CD4-positive, alpha-beta memory T cell (primary cell): ENCODE measurements at regions of chr7 and their contacts with region 1.

Region 1: DNA sequence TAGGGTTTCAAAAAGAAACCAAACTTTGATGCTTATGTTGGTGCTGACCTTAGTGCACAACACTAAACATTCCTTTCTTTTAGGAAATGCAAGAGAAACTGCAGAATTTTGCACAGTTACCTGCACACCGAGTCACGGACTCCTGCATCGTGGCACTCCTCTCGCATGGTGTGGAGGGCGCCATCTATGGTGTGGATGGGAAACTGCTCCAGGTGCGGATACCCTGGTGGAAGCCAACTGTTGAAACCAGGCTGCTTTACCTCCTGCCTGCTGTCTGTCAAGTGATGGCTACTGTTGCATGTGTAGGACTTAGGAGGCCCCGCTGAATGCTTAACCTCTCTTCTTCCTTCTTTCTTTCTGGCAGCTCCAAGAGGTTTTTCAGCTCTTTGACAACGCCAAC is 11.7 kb downstream of the CASP2 start:
- DNase-seq: peak; percentile 61 to 70 (median 68)
- H3K4me3 ChIP-seq: no peak overlapping the region
- H3K4me3 Mint-ChIP-seq: peak overlapping the region in 5 of 8 donors; percentile 26 to 50 (median 30)
- H3K27ac ChIP-seq: no peak overlapping the region
- H3K27ac Mint-ChIP-seq: peak overlapping the region; percentile 14 to 78 (median 56)
- H3K4me1 ChIP-seq: peaks cover 31% of the 10 kb centered on the region
- H3K4me1 Mint-ChIP-seq: peaks cover 32 to 44% (median 39%) of the 10 kb centered on the region in 4 donors
- H3K27me3 ChIP-seq: no peaks in the 10 kb centered on the region
- H3K27me3 Mint-ChIP-seq: no peaks in the 10 kb centered on the region

Region 2: DNA sequence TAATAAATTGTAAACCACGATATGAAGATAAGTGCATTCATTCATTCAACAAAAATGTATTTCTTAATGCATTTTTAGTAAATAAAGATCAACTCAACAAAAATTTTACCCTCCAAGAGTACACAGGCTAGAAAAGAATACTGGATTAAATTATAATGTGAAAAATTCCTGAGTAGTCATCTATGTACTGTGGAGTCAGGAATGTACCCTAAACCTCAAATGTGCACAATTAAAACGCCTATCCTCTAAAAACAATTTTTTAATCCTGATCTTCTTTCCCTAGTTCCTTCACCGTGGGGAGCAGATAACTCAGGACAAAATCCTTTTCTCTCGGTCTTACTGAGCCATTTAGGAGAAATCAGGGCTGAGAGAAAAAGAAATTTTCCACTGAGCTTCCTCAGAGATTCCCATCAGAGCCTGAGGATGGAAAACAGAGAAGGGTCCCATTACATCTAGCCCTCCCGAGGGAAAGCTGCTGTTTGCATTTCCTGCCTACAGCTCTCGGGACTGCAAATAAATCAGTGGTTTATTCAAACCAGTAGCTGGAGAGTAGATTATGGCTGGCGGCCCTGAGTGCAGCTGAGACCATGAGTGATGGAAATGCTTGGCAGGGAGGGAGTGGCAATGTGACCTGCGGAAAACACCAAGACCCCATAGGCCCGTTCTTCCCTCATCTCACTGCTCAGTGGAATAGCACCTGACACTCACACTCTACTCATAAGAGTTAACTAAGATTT is 70.6 kb before region 1 on chr7:
- CTCF ChIA-PET with region 1: interaction called, 19 read pairs
- POLR2A ChIA-PET with region 1: no interaction called
- intact Hi-C with region 1: no loop called
- DNase-seq: no peak
- H3K4me3 ChIP-seq: no peak overlapping the region
- H3K4me3 Mint-ChIP-seq: no peak overlapping the region
- H3K27ac ChIP-seq: no peak overlapping the region
- H3K27ac Mint-ChIP-seq: no peak overlapping the region
- H3K4me1 ChIP-seq: no peaks in the 10 kb centered on the region
- H3K4me1 Mint-ChIP-seq: no peaks in the 10 kb centered on the region
- H3K27me3 ChIP-seq: no peaks in the 10 kb centered on the region
- H3K27me3 Mint-ChIP-seq: no peaks in the 10 kb centered on the region

Region 3: GRCh38 chr7:143263266-143264195 is 36.3 kb before region 1 on chr7 and contains the start of gene GSTK1:
- CTCF ChIA-PET with region 1: interaction called, 49 read pairs
- POLR2A ChIA-PET with region 1: interaction called, 16 read pairs
- intact Hi-C with region 1: no loop called
- DNase-seq: peak; percentile 69 to 86 (median 75)
- H3K4me3 ChIP-seq: peak within 1 kb of the TSS; percentile 89 to 90
- H3K4me3 Mint-ChIP-seq: peak within 1 kb of the TSS; percentile 93 to 99 (median 96)
- H3K27ac ChIP-seq: peak within 1 kb of the TSS; percentile 89
- H3K27ac Mint-ChIP-seq: peak within 1 kb of the TSS; percentile 91 to 98 (median 94)
- H3K4me1 ChIP-seq: peaks cover 72% of the 10 kb centered on the region
- H3K4me1 Mint-ChIP-seq: peaks cover 40 to 81% (median 62%) of the 10 kb centered on the region in 4 donors
- H3K27me3 ChIP-seq: no peaks in the 10 kb centered on the region
- H3K27me3 Mint-ChIP-seq: no peaks in the 10 kb centered on the region
- total RNA-seq, gene GSTK1: 469 to 482 TPM

Region 4: DNA sequence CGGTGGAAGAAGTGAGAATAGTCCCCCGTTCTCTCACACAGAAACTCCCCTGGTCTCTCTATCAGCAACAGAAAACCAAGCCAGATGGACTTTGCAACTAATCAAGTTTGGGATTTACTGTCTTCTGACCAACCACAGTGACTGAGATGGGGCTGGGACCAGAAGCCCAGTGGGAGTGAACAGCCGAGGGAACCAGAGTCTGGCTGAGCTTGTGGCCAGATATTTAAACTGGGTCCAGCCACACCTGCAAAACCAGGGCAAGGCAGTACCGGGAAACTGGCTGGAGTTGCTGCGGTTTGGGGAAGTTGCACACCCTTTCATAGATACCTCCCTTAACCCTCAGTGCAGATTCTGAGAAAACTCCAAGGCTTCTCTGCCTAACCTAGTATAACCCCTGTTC is 30.6 kb before region 1 on chr7:
- CTCF ChIA-PET with region 1: interaction called, 49 read pairs
- POLR2A ChIA-PET with region 1: interaction called, 16 read pairs
- intact Hi-C with region 1: no loop called
- DNase-seq: no peak
- H3K4me3 ChIP-seq: no peak overlapping the region
- H3K4me3 Mint-ChIP-seq: peak overlapping the region in 1 of 8 donors; percentile 7
- H3K27ac ChIP-seq: no peak overlapping the region
- H3K27ac Mint-ChIP-seq: peak overlapping the region in 6 of 7 donors; percentile 19 to 94 (median 69)
- H3K4me1 ChIP-seq: peaks cover 51% of the 10 kb centered on the region
- H3K4me1 Mint-ChIP-seq: peaks cover 24 to 49% (median 36%) of the 10 kb centered on the region in 4 donors
- H3K27me3 ChIP-seq: no peaks in the 10 kb centered on the region
- H3K27me3 Mint-ChIP-seq: no peaks in the 10 kb centered on the region

Region 5: GRCh38 chr7:143279186-143280098 is 20.4 kb before region 1 on chr7:
- CTCF ChIA-PET with region 1: interaction called, 22 read pairs
- POLR2A ChIA-PET with region 1: interaction called, 5 read pairs
- intact Hi-C with region 1: no loop called
- DNase-seq: peak; percentile 52 to 74 (median 60)
- H3K4me3 ChIP-seq: peak overlapping the region; percentile 1 to 48
- H3K4me3 Mint-ChIP-seq: peak overlapping the region; percentile 61 to 89 (median 81)
- H3K27ac ChIP-seq: peak overlapping the region; percentile 74
- H3K27ac Mint-ChIP-seq: peak overlapping the region; percentile 83 to 97 (median 94)
- H3K4me1 ChIP-seq: peaks cover 33% of the 10 kb centered on the region
- H3K4me1 Mint-ChIP-seq: peaks cover 34 to 40% (median 37%) of the 10 kb centered on the region in 4 donors
- H3K27me3 ChIP-seq: no peaks in the 10 kb centered on the region
- H3K27me3 Mint-ChIP-seq: no peaks in the 10 kb centered on the region

Region 6: GRCh38 chr7:143287935-143288826 is 11.7 kb before region 1 on chr7 and contains the start of gene CASP2:
- CTCF ChIA-PET with region 1: interaction called, 28 read pairs
- POLR2A ChIA-PET with region 1: interaction called, 23 read pairs
- intact Hi-C with region 1: loop called (anchors 2 kb)
- DNase-seq: peak; percentile 99 to 100 (median 99)
- H3K4me3 ChIP-seq: peak within 1 kb of the TSS; percentile 82 to 92
- H3K4me3 Mint-ChIP-seq: peak within 1 kb of the TSS; percentile 92 to 99 (median 96)
- H3K27ac ChIP-seq: peak within 1 kb of the TSS; percentile 78
- H3K27ac Mint-ChIP-seq: peak within 1 kb of the TSS; percentile 83 to 98 (median 95)
- H3K4me1 ChIP-seq: peaks cover 44% of the 10 kb centered on the region
- H3K4me1 Mint-ChIP-seq: peaks cover 39 to 75% (median 57%) of the 10 kb centered on the region in 4 donors
- H3K27me3 ChIP-seq: no peaks in the 10 kb centered on the region
- H3K27me3 Mint-ChIP-seq: no peaks in the 10 kb centered on the region
- total RNA-seq, gene CASP2: 94.3 to 96.1 TPM

Region 7: GRCh38 chr7:143416565-143417149 is 116.8 kb after region 1 on chr7:
- CTCF ChIA-PET with region 1: interaction called, 33 read pairs
- POLR2A ChIA-PET with region 1: no interaction called
- intact Hi-C with region 1: loop called (anchors 1 kb)
- DNase-seq: peak in 4 of 5 donors; percentile 47 to 62 (median 53)
- H3K4me3 ChIP-seq: no peak overlapping the region
- H3K4me3 Mint-ChIP-seq: no peak overlapping the region
- H3K27ac ChIP-seq: no peak overlapping the region
- H3K27ac Mint-ChIP-seq: no peak overlapping the region
- H3K4me1 ChIP-seq: no peaks in the 10 kb centered on the region
- H3K4me1 Mint-ChIP-seq: peaks cover 0 to 9% (median 8%) of the 10 kb centered on the region in 4 donors
- H3K27me3 ChIP-seq: no peaks in the 10 kb centered on the region
- H3K27me3 Mint-ChIP-seq: no peaks in the 10 kb centered on the region

Region 8: DNA sequence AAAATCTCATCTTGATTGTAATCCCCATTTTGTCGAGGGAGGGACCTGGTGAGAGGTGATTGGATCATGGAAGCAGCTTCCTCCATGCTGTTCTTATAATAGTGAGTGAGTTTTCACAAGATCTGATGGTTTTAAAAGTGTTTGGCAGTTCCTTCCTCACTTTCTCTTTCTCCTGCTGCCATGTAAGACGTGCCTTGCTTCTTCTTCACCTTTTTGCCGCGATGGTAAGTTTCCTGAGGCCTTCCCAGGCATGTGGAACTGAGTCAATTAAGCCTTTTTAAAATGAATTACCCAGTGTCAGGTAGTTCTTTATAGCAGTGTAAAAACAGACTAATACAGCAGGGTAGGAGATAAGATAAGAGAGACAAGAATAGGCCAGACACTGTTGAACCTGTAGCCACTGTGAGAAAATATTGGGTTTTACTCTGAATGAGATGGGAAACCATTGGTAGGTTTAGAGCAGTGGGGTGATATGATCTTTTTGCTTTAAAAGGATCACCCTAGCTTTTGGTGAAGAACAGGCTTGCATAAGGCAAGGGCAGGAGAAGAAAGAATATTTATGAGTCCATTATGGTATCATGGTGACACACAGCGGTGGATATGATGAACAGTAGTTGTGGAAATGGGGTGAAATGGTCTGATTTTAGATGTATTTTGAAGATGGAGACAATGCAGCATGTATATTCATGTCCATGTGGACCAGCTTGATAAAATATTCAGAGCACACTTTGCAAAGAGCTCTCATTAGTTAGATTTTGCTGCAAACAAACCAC is 711.8 kb after region 1 on chr7:
- CTCF ChIA-PET with region 1: no interaction called
- POLR2A ChIA-PET with region 1: no interaction called
- intact Hi-C with region 1: no loop called
- DNase-seq: no peak
- H3K4me3 ChIP-seq: no peak overlapping the region
- H3K4me3 Mint-ChIP-seq: no peak overlapping the region
- H3K27ac ChIP-seq: no peak overlapping the region
- H3K27ac Mint-ChIP-seq: no peak overlapping the region
- H3K4me1 ChIP-seq: no peaks in the 10 kb centered on the region
- H3K4me1 Mint-ChIP-seq: no peaks in the 10 kb centered on the region
- H3K27me3 ChIP-seq: no peaks in the 10 kb centered on the region
- H3K27me3 Mint-ChIP-seq: peaks cover 6 to 11% of the 10 kb centered on the region in 2 donors